T-cell (primary cell): ENCODE measurements at regions of chr20 and their contacts with region 1.

Region 1: DNA sequence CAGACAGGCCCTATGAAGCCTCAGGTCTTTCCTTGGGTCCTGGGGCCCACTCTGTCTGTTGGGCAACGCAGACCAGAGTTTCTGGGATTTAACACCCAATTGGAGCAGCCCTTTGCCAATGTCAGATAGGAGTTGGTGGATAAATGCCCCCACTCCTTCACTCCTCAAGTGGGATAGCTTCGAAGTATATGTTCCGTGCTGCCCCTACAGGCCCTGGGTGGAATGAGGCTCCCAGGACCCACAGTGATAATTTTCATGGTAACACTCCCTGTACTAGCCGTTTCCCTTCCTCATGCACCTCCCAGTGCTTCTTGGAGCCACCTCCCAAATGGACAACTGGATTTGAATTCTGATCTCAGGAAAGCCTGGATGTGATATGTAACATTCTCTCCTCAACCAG is 145.4 kb downstream of the FOXA2 start:
- DNase-seq: no peak
- ATAC-seq: no peak
- H3K4me3 ChIP-seq: no peak overlapping the region
- H3K4me3 Mint-ChIP-seq: no peak overlapping the region
- H3K27ac ChIP-seq: no peak overlapping the region
- H3K27ac Mint-ChIP-seq: no peak overlapping the region
- H3K4me1 ChIP-seq: no peaks in the 10 kb centered on the region
- H3K4me1 Mint-ChIP-seq: no peaks in the 10 kb centered on the region
- H3K27me3 ChIP-seq: no peaks in the 10 kb centered on the region
- H3K27me3 Mint-ChIP-seq: no peaks in the 10 kb centered on the region

Region 2: GRCh38 chr20:22462975-22463914 is 24.3 kb after region 1 on chr20:
- CTCF ChIA-PET with region 1: no interaction called
- POLR2A ChIA-PET with region 1: interaction called in 1 of 2 experiments, 15 read pairs
- DNase-seq: no peak
- ATAC-seq: no peak
- H3K4me3 ChIP-seq: no peak overlapping the region
- H3K4me3 Mint-ChIP-seq: no peak overlapping the region
- H3K27ac ChIP-seq: no peak overlapping the region
- H3K27ac Mint-ChIP-seq: no peak overlapping the region
- H3K4me1 ChIP-seq: no peaks in the 10 kb centered on the region
- H3K4me1 Mint-ChIP-seq: no peaks in the 10 kb centered on the region
- H3K27me3 ChIP-seq: peaks cover 0 to 3% of the 10 kb centered on the region in 2 experiments
- H3K27me3 Mint-ChIP-seq: peaks cover 0 to 12% of the 10 kb centered on the region in 2 donors